ENCODE measurements at regions of chr4 and their contacts with region 1.

Region 1: DNA sequence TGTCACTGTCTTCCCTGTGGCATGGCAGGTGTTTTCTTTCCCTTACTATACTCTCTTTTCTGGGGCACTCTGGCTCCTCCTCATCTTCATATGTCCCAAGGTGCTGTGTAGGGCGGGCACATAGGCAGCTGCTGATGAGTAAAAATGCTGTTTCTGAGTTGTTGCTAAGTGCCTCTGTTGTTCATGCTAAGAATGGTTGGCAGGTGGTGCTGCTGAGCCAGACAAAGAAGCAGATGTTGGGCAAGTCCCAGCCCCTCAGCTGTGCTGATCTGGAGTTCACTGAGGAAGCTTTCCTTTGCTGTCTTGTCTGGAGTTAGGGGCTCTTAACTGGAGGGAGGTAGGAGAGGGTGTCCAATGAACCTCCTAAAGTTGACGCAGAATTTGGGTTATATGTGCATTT is 40.6 kb downstream of the HADH start:
- DNase-seq: peak; percentile 30 to 85 (median 78)
- ATAC-seq: peak; percentile 91
- H3K4me3 ChIP-seq: no peak overlapping the region
- H3K4me3 Mint-ChIP-seq: peak overlapping the region; percentile 70 to 84 (median 76)
- H3K27ac ChIP-seq: peak overlapping the region; percentile 61
- H3K27ac Mint-ChIP-seq: peak overlapping the region; percentile 86 to 96 (median 94)
- H3K4me1 ChIP-seq: peaks cover 9 to 53% of the 10 kb centered on the region in 2 donors
- H3K4me1 Mint-ChIP-seq: peaks cover 28 to 77% (median 66%) of the 10 kb centered on the region in 7 donors
- H3K27me3 ChIP-seq: no peaks in the 10 kb centered on the region
- H3K27me3 Mint-ChIP-seq: no peaks in the 10 kb centered on the region

Region 2: GRCh38 chr4:107468812-107469211 is 561.5 kb before region 1 on chr4:
- CTCF ChIA-PET with region 1: no interaction called
- POLR2A ChIA-PET with region 1: no interaction called
- intact Hi-C with region 1: no loop called
- DNase-seq: no peak
- ATAC-seq: no peak
- H3K4me3 ChIP-seq: no peak overlapping the region
- H3K4me3 Mint-ChIP-seq: no peak overlapping the region
- H3K27ac ChIP-seq: no peak overlapping the region
- H3K27ac Mint-ChIP-seq: no peak overlapping the region
- H3K4me1 ChIP-seq: no peaks in the 10 kb centered on the region
- H3K4me1 Mint-ChIP-seq: no peaks in the 10 kb centered on the region
- H3K27me3 ChIP-seq: no peaks in the 10 kb centered on the region
- H3K27me3 Mint-ChIP-seq: peaks cover 0 to 8% (median 3%) of the 10 kb centered on the region in 5 donors

Region 3: DNA sequence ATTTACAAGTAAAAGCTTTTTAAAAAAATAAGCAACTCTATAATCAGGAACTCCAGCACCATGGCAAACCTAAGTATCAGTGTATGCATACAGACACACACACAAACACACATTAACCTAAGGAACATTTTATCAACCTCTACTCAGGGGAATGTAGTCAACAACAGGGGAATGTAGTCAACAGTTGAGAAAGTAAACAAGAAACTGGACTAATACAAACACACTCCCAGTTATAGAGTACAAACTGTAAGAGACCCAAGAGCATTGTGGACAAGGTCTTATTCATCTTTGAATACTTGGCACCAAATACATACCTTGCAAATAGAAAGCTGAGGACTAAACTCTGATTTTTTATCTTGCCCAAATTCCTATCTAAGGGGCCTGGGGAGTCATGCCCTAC is 346.5 kb before region 1 on chr4:
- CTCF ChIA-PET with region 1: no interaction called
- POLR2A ChIA-PET with region 1: no interaction called
- intact Hi-C with region 1: no loop called
- DNase-seq: no peak
- ATAC-seq: no peak
- H3K4me3 ChIP-seq: no peak overlapping the region
- H3K4me3 Mint-ChIP-seq: no peak overlapping the region
- H3K27ac ChIP-seq: no peak overlapping the region
- H3K27ac Mint-ChIP-seq: peak overlapping the region in 1 of 9 donors; percentile 28
- H3K4me1 ChIP-seq: no peaks in the 10 kb centered on the region
- H3K4me1 Mint-ChIP-seq: peaks cover 0 to 8% (median 0%) of the 10 kb centered on the region in 7 donors
- H3K27me3 ChIP-seq: no peaks in the 10 kb centered on the region
- H3K27me3 Mint-ChIP-seq: no peaks in the 10 kb centered on the region

Region 4: DNA sequence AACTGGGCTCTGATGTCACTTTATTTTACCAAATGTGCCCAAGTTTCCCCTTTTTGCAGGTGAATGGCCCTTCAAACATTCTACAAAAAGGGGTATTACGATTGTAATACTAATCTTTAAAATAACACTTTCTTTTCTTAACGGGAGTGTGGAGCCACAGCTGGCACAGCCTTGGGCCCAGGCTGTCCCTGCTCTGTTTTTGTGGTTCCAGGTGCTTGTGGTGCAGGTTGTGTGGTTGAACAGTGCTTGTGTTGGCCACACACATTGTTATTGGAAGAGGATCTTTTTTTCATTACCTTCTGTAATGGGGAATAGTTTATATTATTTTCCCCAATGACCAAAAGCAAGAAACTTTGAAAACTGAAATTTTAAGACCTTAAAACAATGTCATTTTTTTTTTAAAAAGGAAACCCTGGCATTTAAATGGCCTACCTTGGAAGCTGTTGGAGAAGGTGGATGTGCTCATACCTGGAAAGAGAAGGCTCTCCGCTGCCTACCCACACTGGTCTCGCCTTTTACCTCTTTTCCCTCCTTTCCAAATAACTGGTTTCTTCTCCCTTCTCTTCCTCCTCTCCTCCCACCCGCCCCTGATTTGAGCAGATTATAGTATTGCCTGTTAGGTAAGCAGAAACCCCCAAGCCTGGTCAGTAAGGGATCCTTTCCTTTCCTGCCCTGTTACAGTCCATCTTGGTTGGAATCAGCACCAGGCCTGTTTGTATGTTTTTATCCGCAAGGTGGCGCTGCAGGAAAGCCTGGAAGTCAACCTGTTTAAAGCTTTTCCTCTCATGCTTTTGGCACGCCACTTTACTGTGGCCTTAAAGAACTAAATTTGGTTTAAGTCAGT is 12.1 kb before region 1 on chr4:
- CTCF ChIA-PET with region 1: interaction called, 32 read pairs
- POLR2A ChIA-PET with region 1: interaction called, 6 read pairs
- intact Hi-C with region 1: no loop called
- DNase-seq: peak; percentile 63 to 86 (median 76)
- ATAC-seq: peak; percentile 84
- H3K4me3 ChIP-seq: no peak overlapping the region
- H3K4me3 Mint-ChIP-seq: no peak overlapping the region
- H3K27ac ChIP-seq: no peak overlapping the region
- H3K27ac Mint-ChIP-seq: peak overlapping the region in 6 of 9 donors; percentile 5 to 86 (median 52)
- H3K4me1 ChIP-seq: no peaks in the 10 kb centered on the region
- H3K4me1 Mint-ChIP-seq: peaks cover 0 to 27% (median 14%) of the 10 kb centered on the region in 7 donors
- H3K27me3 ChIP-seq: no peaks in the 10 kb centered on the region
- H3K27me3 Mint-ChIP-seq: no peaks in the 10 kb centered on the region

Region 5: GRCh38 chr4:108072300-108072699 is 42.0 kb after region 1 on chr4:
- CTCF ChIA-PET with region 1: interaction called, 6 read pairs
- POLR2A ChIA-PET with region 1: interaction called, 8 read pairs
- intact Hi-C with region 1: loop called (anchors 1 to 2 kb)
- DNase-seq: peak in 7 of 9 donors; percentile 63 to 94 (median 80)
- ATAC-seq: peak; percentile 92
- H3K4me3 ChIP-seq: peak overlapping the region; percentile 0
- H3K4me3 Mint-ChIP-seq: peak overlapping the region; percentile 53 to 81 (median 74)
- H3K27ac ChIP-seq: peak overlapping the region; percentile 77
- H3K27ac Mint-ChIP-seq: peak overlapping the region; percentile 84 to 98 (median 94)
- H3K4me1 ChIP-seq: peaks cover 23 to 62% of the 10 kb centered on the region in 2 donors
- H3K4me1 Mint-ChIP-seq: peaks cover 32 to 95% (median 81%) of the 10 kb centered on the region in 7 donors
- H3K27me3 ChIP-seq: no peaks in the 10 kb centered on the region
- H3K27me3 Mint-ChIP-seq: no peaks in the 10 kb centered on the region

Region 6: DNA sequence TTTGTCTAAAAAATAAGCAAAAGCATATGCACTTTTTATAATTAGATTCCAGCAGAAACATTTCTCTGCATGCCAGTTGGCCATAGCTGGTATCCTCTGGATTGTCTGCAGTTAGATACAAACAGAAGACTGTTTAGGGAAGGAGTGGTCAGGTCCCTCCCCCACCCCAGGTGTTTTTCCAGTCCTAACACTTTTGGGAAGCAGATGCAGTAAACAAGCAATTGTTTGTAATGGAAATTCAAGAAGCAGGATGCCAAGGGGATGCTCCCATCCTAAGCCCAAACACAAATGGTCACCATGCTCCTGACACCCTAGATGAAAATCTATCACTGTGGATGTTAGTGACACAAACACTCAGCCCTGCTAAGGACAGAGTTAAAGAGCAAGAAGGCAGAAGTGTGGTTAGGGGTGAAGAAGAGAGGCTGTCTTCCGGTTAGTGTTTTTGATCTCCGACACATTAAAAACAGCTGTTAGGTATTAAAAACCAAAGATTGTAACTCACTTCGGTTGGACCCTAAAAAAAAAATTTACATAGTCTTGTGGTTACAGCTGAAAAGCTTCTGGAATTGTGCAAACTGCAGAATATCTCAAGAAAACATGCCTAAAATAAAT is 130.5 kb after region 1 on chr4:
- CTCF ChIA-PET with region 1: interaction called, 22 read pairs
- POLR2A ChIA-PET with region 1: interaction called, 120 read pairs
- intact Hi-C with region 1: loop called (anchors 1 kb)
- DNase-seq: peak in 6 of 9 donors; percentile 47 to 63 (median 51)
- ATAC-seq: peak; percentile 62
- H3K4me3 ChIP-seq: peak overlapping the region; percentile 77
- H3K4me3 Mint-ChIP-seq: peak overlapping the region; percentile 83 to 100 (median 97)
- H3K27ac ChIP-seq: peak overlapping the region; percentile 87
- H3K27ac Mint-ChIP-seq: peak overlapping the region; percentile 63 to 97 (median 92)
- H3K4me1 ChIP-seq: peaks cover 31 to 41% of the 10 kb centered on the region in 2 donors
- H3K4me1 Mint-ChIP-seq: peaks cover 12 to 70% (median 44%) of the 10 kb centered on the region in 7 donors
- H3K27me3 ChIP-seq: no peaks in the 10 kb centered on the region
- H3K27me3 Mint-ChIP-seq: peaks cover 0 to 4% (median 0%) of the 10 kb centered on the region in 5 donors

Region 7: GRCh38 chr4:108355186-108355901 is 325.0 kb after region 1 on chr4:
- CTCF ChIA-PET with region 1: no interaction called
- POLR2A ChIA-PET with region 1: interaction called, 3 read pairs
- intact Hi-C with region 1: loop called (anchors 2 to 5 kb)
- DNase-seq: peak in 8 of 9 donors; percentile 28 to 92 (median 86)
- ATAC-seq: peak; percentile 90
- H3K4me3 ChIP-seq: peak overlapping the region; percentile 20
- H3K4me3 Mint-ChIP-seq: peak overlapping the region; percentile 57 to 87 (median 70)
- H3K27ac ChIP-seq: peak overlapping the region; percentile 86
- H3K27ac Mint-ChIP-seq: peak overlapping the region; percentile 76 to 99 (median 96)
- H3K4me1 ChIP-seq: peaks cover 17 to 59% of the 10 kb centered on the region in 2 donors
- H3K4me1 Mint-ChIP-seq: peaks cover 34 to 96% (median 83%) of the 10 kb centered on the region in 7 donors
- H3K27me3 ChIP-seq: no peaks in the 10 kb centered on the region
- H3K27me3 Mint-ChIP-seq: peaks cover 0 to 14% (median 0%) of the 10 kb centered on the region in 5 donors

Region 8: GRCh38 chr4:108570993-108571569 is 540.7 kb after region 1 on chr4:
- CTCF ChIA-PET with region 1: interaction called, 18 read pairs
- POLR2A ChIA-PET with region 1: interaction called, 6 read pairs
- intact Hi-C with region 1: loop called (anchors 1 kb)
- DNase-seq: no peak
- ATAC-seq: no peak
- H3K4me3 ChIP-seq: no peak overlapping the region
- H3K4me3 Mint-ChIP-seq: no peak overlapping the region
- H3K27ac ChIP-seq: no peak overlapping the region
- H3K27ac Mint-ChIP-seq: peak overlapping the region in 5 of 9 donors; percentile 0 to 74 (median 28)
- H3K4me1 ChIP-seq: peaks cover 0 to 11% of the 10 kb centered on the region in 2 donors
- H3K4me1 Mint-ChIP-seq: peaks cover 13 to 44% (median 32%) of the 10 kb centered on the region in 7 donors
- H3K27me3 ChIP-seq: no peaks in the 10 kb centered on the region
- H3K27me3 Mint-ChIP-seq: no peaks in the 10 kb centered on the region

Measured in naive thymus-derived CD4-positive, alpha-beta T cell (primary cell).